CD4-positive, alpha-beta memory T cell (primary cell): ENCODE measurements at regions of chr17 and their contacts with region 1.

Region 1: DNA sequence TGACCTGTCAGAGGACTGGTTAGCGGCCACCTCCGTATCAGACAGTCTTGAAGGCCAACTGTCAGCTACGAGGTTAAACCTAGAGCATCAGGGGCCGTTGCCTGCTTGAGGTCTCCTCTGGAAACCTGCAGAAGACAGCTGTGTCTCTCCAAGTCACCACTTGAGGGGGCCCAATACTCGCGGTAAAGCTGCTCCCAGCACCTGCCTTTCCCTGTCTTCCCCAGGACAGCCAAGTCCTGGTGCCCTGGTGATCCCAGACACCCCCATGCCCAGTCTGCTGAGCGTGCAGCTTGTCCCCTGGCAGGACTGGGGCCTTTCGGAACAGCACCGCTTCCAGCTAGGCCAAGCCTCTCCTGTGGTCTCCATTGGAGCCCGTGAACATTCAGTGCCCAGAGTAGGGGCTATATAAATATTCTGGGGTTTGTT is 80.1 kb downstream of the DNAH17 start:
- DNase-seq: peak; percentile 47 to 63 (median 58)
- H3K4me3 ChIP-seq: no peak overlapping the region
- H3K4me3 Mint-ChIP-seq: no peak overlapping the region
- H3K27ac ChIP-seq: no peak overlapping the region
- H3K27ac Mint-ChIP-seq: no peak overlapping the region
- H3K4me1 ChIP-seq: no peaks in the 10 kb centered on the region
- H3K4me1 Mint-ChIP-seq: no peaks in the 10 kb centered on the region
- H3K27me3 ChIP-seq: no peaks in the 10 kb centered on the region
- H3K27me3 Mint-ChIP-seq: no peaks in the 10 kb centered on the region

Region 2: GRCh38 chr17:78421484-78422266 is 75.5 kb before region 1 on chr17:
- CTCF ChIA-PET with region 1: no interaction called
- POLR2A ChIA-PET with region 1: no interaction called
- intact Hi-C with region 1: no loop called
- DNase-seq: peak; percentile 63 to 74 (median 64)
- H3K4me3 ChIP-seq: no peak overlapping the region
- H3K4me3 Mint-ChIP-seq: no peak overlapping the region
- H3K27ac ChIP-seq: no peak overlapping the region
- H3K27ac Mint-ChIP-seq: peak overlapping the region in 6 of 7 donors; percentile 12 to 79 (median 54)
- H3K4me1 ChIP-seq: peaks cover 9% of the 10 kb centered on the region
- H3K4me1 Mint-ChIP-seq: peaks cover 10 to 22% (median 14%) of the 10 kb centered on the region in 4 donors
- H3K27me3 ChIP-seq: no peaks in the 10 kb centered on the region
- H3K27me3 Mint-ChIP-seq: no peaks in the 10 kb centered on the region

Region 3: DNA sequence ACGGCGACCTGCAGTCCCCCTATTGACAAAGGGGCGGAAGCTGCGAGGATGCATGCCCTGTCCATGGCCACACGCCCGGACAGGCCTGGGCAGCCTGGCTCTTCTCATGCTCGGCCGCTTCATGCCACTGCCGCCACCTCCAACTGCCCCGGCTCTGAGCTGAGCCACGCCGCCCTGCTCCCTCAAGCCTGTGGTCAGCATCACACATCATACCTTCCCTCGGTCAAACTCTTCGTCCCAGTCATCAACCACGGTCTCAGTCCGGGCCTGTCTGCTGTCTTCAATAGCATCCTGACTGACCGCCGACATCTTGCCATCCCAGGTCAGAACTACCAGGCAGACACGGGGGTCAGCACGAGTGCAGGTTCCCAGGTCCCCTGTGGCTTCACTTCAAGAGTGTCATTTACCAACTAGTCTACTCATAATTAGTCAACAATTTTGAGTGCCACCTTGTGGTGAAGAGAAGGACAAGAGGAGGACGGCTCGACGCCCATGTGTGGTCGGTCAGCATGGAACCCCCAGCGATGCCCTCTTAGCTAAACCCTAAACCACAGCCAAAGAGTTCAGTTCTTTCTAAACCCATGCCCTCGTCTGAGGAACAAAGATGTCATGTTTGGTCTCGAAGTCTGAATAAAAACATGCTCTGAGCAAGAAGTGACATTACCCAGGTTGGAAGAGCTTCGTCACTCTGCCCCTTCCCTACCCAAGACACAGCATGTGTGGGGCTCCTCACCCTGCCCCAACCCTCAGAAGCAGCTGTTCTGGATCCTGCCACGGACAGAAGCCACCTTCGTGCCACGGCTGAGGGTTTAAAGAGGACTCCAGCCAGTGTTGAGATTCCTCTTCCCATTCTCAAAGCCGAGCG is 301.8 kb after region 1 on chr17:
- CTCF ChIA-PET with region 1: interaction called, 4 read pairs
- POLR2A ChIA-PET with region 1: no interaction called
- intact Hi-C with region 1: loop called (anchors 2 kb)
- DNase-seq: peak in 4 of 5 donors; percentile 50 to 65 (median 57)
- H3K4me3 ChIP-seq: no peak overlapping the region
- H3K4me3 Mint-ChIP-seq: peak overlapping the region; percentile 28 to 79 (median 66)
- H3K27ac ChIP-seq: no peak overlapping the region
- H3K27ac Mint-ChIP-seq: peak overlapping the region; percentile 87 to 99 (median 94)
- H3K4me1 ChIP-seq: peaks cover 37% of the 10 kb centered on the region
- H3K4me1 Mint-ChIP-seq: peaks cover 46 to 79% (median 62%) of the 10 kb centered on the region in 4 donors
- H3K27me3 ChIP-seq: no peaks in the 10 kb centered on the region
- H3K27me3 Mint-ChIP-seq: no peaks in the 10 kb centered on the region